Dendritic cell treated with granulocyte-macrophage colony-stimulating factor and Interleukin-4, amounts not matched to agents 40 ng/mL and 50 ng/mL, for 4 days (primary cell): ENCODE measurements at regions of chr2 and their contacts with region 1.

Region 1: DNA sequence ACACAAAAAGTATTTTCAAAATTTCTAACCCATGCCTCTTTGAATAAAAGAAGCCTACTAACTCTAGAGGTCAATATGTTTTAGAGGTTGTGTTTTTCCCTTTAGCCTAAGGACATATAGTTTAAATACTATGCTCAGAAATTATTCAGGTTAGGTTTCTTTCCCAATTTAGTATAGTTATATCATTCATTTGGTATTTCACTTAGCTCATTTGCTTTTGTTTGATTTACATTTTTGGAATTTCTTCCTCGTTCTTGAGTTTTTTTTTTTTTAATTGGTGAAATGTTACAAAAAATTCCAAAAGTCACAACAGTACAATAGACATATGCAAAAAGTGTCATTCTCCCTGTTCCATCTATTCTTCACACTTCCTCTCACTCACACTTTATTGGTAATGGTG is 371.3 kb upstream of the TNP1 start:
- H3K4me3 Mint-ChIP-seq: no peak overlapping the region
- H3K27ac Mint-ChIP-seq: no peak overlapping the region
- H3K4me1 Mint-ChIP-seq: no peaks in the 10 kb centered on the region
- H3K27me3 Mint-ChIP-seq: peaks cover 78% of the 10 kb centered on the region

Region 2: DNA sequence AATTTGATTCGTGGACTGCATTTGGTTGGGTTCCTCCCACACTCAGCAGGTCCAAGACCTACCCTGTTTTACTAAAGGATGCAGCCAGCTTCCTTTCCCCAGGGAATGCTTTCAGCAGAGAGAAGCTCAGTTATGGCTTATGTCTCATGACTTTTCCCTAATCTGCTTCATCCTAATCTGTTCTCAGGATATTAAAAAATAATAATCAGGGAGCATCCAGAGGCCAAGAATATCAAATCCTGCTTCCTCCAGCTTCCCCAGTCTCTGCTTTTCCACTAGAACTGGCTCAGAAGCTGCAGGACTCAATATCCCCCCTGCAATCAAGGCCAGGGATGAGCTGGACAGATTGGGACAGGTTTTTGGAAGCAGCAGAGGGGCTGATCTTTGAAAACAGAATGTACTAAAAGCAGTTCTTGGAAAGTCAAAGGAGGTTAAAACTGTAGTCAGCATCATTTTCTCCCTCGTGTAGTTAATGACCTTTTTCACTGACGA is 44.5 kb before region 1 on chr2:
- intact Hi-C with region 1: no loop called
- H3K4me3 Mint-ChIP-seq: no peak overlapping the region
- H3K27ac Mint-ChIP-seq: no peak overlapping the region
- H3K4me1 Mint-ChIP-seq: no peaks in the 10 kb centered on the region
- H3K27me3 Mint-ChIP-seq: peaks cover 76% of the 10 kb centered on the region

Region 3: DNA sequence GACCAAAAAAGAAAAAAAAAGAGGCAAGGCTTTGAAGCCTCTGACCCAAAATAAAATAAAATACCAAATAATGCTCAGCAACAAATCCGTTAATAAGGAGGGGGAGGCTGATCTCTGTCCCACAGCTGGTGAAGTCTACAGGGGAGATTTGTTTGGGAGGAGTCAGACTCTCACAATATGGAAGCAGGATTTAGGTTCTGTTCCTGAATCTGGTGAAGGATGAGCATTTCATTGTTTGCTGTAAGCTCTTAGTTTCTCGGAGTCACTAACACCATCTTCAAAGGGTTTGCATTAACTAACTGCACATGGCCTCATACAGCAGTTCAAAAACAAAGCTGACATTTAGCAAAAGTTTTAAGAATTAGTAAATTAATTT is 32.0 kb before region 1 on chr2:
- intact Hi-C with region 1: loop called (anchors 5 kb)
- H3K4me3 Mint-ChIP-seq: no peak overlapping the region
- H3K27ac Mint-ChIP-seq: no peak overlapping the region
- H3K4me1 Mint-ChIP-seq: no peaks in the 10 kb centered on the region
- H3K27me3 Mint-ChIP-seq: peaks cover 83% of the 10 kb centered on the region